ENCODE measurements at regions of chr11 and their contacts with region 1.

Region 1: DNA sequence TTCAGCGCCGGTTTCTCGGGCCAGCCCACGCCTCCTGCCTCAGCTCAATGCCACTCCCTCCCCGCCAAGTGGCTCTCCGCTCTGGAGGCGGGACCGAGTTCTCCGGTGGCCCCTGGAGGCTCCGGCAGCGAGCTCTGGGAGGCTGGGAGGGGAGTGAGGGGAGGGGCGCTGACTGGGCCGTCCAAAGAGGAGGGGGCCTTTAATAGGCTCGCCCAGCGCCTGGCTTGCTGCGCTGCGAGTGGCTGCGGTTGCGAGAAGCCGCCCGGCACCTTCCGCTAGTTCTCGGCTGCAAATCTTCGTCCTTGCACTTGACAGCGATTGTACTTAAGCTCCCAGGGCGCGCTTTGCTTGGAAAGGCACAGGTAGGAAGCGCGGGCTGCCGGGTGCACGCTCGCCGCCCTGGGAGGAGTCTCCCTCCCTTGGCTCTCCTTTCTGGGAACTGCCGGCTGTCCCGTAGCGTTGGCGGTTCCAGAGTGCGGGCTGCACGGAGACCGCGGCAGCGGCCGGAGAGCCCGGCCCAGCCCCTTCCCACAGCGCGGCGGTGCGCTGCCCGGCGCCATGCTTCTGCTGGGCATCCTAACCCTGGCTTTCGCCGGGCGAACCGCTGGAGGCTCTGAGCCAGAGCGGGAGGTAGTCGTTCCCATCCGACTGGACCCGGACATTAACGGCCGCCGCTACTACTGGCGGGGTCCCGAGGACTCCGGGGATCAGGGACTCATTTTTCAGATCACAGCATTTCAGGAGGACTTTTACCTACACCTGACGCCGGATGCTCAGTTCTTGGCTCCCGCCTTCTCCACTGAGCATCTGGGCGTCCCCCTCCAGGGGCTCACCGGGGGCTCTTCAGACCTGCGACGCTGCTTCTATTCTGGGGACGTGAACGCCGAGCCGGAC is at the start of gene ADAMTS15:
- DNase-seq: peak; percentile 80 to 87
- H3K4me3 ChIP-seq: peak within 1 kb of the TSS; percentile 49 to 72 (median 54)
- H3K27ac ChIP-seq: no peak within 1 kb of the TSS
- H3K4me1 ChIP-seq: peaks cover 0 to 9% (median 6%) of the 10 kb centered on the region in 4 experiments; a peak in 6 of 7 replicates
- H3K27me3 ChIP-seq: peaks cover 9 to 63% (median 44%) of the 10 kb centered on the region in 4 experiments
- CTCF ChIP-seq: no peak; a peak in 1 of 4 replicates
- EP300 ChIP-seq: no peak
- POLR2A ChIP-seq: peak in 1 of 2 experiments; percentile 34; a peak in 1 of 3 replicates
- RAD21 ChIP-seq: no peak
- total RNA-seq, gene ADAMTS15: 4.7 and 4.9 TPM in 2 replicates

Region 2: DNA sequence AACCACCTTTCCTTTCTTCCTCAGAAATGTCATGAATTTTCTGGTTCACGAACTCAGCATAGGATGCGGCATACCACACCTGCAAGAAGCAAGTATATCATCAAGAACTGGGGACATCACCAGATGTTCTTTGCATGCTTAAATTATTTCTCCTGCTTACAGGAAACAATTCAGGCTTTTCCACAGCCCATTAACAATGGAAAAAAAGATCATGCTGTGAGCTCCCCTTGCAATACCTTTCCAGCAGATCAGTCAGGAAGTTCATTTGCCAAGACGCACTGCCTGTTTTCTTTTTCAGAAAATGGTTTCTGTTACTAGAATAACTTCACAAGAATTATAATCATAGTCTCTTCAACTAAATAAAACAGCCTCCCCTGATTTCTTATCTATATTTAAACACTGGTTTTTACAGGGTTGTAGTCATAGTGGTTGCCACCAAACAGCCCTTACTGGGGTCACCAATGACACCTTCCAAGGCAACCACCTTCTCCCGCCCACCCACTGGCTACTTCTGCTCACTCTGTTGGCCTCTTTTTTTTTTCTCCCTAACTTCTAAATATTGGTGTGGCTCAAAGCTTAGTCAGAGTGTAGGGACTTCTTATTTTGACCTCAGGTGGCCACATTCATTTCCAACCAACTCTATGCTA is 510.9 kb before region 1 on chr11:
- CTCF ChIA-PET with region 1: no interaction called
- POLR2A ChIA-PET with region 1: no interaction called
- DNase-seq: no peak
- H3K4me3 ChIP-seq: no peak overlapping the region
- H3K27ac ChIP-seq: no peak overlapping the region
- H3K4me1 ChIP-seq: peaks cover 0 to 11% (median 6%) of the 10 kb centered on the region in 4 experiments; a peak in 6 of 7 replicates
- H3K27me3 ChIP-seq: no peaks in the 10 kb centered on the region
- CTCF ChIP-seq: no peak
- EP300 ChIP-seq: no peak
- POLR2A ChIP-seq: no peak
- RAD21 ChIP-seq: no peak

Region 3: DNA sequence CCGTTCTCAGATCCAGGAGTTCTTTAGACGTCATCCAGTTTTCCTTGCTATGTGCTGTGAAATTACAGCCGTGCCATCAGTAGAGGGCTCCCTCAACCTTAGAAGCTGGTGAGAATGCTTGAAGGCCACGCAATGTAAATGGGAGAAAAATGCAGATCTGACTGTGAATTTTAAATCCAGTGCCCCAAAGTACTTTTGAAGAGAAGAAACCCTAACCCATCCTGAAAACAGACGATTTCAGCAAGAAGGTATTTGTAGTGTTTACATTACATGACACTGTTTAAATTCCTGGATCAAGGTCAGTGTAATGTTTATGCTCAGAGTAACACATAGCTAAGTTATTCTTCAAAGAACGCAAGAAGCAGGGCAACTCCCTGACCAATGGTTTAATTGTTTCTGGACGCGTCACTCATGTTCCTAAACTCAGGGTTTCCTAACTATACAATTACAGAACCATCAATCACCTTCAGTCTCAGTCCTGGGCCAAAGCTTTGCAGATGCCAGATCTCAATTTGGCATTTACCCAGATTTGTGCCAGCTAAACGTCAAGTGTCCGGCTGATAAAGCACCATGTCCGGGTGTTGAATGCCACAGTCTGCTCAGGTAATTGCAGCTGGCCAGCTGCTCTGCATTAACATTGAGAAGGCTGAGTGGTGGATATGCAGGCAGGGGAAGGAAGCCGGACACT is 58.4 kb before region 1 on chr11:
- CTCF ChIA-PET with region 1: no interaction called
- POLR2A ChIA-PET with region 1: no interaction called
- DNase-seq: no peak
- H3K4me3 ChIP-seq: no peak overlapping the region
- H3K27ac ChIP-seq: no peak overlapping the region
- H3K4me1 ChIP-seq: peaks cover 0 to 6% (median 1%) of the 10 kb centered on the region in 4 experiments; a peak in 3 of 7 replicates
- H3K27me3 ChIP-seq: no peaks in the 10 kb centered on the region; a peak in 1 of 7 replicates
- CTCF ChIP-seq: peak; percentile 1 to 61 (median 55)
- EP300 ChIP-seq: no peak
- POLR2A ChIP-seq: no peak
- RAD21 ChIP-seq: peak; percentile 63 to 71

Region 4: DNA sequence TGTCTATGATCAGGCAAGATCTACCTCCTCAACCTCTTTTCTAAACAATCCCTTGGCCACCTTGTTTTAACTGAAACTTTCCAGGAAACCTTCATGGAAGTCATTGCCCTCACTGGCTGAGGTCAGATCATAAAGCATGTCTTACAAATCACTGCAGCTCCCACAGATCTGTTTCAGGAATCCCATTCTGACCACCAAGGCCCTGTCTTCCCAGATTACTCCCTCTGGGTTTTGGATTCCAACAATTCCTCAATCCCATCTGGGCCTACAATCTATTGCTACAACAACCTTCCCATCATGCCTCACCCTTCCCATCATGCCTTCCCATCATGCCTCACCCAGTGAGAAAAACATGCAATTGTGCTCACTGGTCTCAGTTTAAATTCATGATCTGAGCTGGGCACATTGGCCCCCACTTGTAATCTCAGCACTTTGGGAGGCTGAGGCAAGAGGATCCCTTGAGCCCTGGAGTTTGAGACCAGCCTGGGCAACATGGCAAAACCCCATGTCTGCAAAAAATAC is 15.7 kb after region 1 on chr11:
- CTCF ChIA-PET with region 1: interaction called, 16 read pairs
- POLR2A ChIA-PET with region 1: no interaction called
- DNase-seq: no peak
- H3K4me3 ChIP-seq: no peak overlapping the region
- H3K27ac ChIP-seq: no peak overlapping the region
- H3K4me1 ChIP-seq: no peaks in the 10 kb centered on the region
- H3K27me3 ChIP-seq: no peaks in the 10 kb centered on the region
- CTCF ChIP-seq: no peak
- EP300 ChIP-seq: no peak
- POLR2A ChIP-seq: no peak
- RAD21 ChIP-seq: no peak

Region 5: GRCh38 chr11:130510407-130511006 is 61.8 kb after region 1 on chr11:
- CTCF ChIA-PET with region 1: interaction called, 13 read pairs
- POLR2A ChIA-PET with region 1: no interaction called
- DNase-seq: peak in 1 of 2 experiments; percentile 34
- H3K4me3 ChIP-seq: no peak overlapping the region
- H3K27ac ChIP-seq: no peak overlapping the region
- H3K4me1 ChIP-seq: no peaks in the 10 kb centered on the region; a peak in 1 of 7 replicates
- H3K27me3 ChIP-seq: no peaks in the 10 kb centered on the region
- CTCF ChIP-seq: no peak
- EP300 ChIP-seq: no peak
- POLR2A ChIP-seq: no peak
- RAD21 ChIP-seq: no peak

Region 6: GRCh38 chr11:130515829-130516553 is 67.3 kb after region 1 on chr11:
- CTCF ChIA-PET with region 1: interaction called, 13 read pairs
- POLR2A ChIA-PET with region 1: no interaction called
- DNase-seq: no peak
- H3K4me3 ChIP-seq: no peak overlapping the region
- H3K27ac ChIP-seq: no peak overlapping the region
- H3K4me1 ChIP-seq: peaks cover 6 to 11% (median 7%) of the 10 kb centered on the region in 4 experiments
- H3K27me3 ChIP-seq: no peaks in the 10 kb centered on the region; a peak in 1 of 7 replicates
- CTCF ChIP-seq: no peak
- EP300 ChIP-seq: no peak
- POLR2A ChIP-seq: no peak
- RAD21 ChIP-seq: no peak

Region 7: DNA sequence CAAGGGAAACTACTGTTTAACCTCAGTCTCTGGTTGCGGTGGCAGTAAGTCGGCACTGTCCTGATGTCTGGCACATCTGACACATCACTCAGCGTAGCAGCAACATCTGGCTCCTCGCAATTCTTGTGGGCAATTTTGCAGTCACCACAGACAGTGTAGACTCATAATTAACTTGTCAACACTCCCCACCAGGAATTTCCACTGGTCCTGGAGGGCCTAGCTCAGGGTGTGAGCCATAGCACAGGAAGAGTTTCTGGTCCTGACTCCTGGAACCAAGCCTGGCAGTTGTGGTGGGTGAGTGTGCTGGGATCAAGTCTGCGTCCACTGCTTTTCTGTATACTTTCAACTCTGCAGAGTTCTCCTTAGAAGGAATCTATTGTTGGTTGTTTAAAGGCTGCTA is 257.9 kb after region 1 on chr11:
- CTCF ChIA-PET with region 1: no interaction called
- POLR2A ChIA-PET with region 1: no interaction called
- DNase-seq: no peak
- H3K4me3 ChIP-seq: no peak overlapping the region
- H3K27ac ChIP-seq: no peak overlapping the region
- H3K4me1 ChIP-seq: no peaks in the 10 kb centered on the region; a peak in 1 of 7 replicates
- H3K27me3 ChIP-seq: no peaks in the 10 kb centered on the region
- CTCF ChIP-seq: no peak
- EP300 ChIP-seq: no peak
- POLR2A ChIP-seq: no peak
- RAD21 ChIP-seq: no peak

Region 8: DNA sequence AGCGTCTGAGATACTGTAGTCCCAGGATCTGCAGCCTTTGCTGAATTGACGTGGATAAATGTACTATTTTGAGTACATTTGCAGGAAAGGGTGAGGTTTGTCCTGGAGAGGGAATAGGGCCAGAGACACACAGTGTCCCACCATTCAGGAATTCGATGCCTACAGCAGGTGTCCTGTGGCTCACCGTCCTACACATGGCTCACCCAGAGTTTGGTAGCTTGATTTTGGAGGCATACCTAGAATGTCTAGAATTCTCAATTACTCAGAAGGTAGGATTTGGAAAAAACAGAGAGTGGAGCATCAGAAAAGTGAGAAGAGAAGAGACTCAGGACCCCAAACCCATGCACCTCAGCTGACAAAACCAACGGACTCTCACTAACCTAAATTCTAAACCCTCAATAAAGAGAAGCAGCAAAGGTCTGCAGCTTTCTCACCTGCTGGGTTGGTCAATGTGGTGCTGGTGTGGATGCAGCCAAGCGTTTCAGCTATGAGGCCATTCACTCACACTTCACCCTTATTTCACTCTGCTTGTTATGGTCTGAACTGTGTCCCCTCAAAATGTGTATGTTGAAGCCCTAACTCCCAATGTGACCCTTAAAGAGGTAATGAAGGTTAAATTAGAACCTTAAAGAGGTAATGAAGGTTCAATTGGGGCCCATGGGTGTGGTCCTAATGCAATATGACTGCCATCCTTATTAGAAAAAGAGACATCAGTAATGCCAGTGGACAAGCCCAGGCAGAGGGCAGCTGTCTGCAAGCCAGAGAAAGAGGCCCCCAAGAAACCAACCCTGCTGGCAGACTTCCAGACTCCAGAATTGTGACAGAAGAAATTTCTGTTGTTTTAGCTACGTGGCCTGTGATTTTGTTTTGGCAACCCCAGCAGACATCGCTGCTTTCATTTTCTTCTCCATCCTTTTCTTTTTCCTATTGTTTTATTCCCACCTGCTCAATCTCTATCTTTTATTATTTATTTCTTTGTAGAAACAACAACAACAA is 279.8 kb after region 1 on chr11:
- CTCF ChIA-PET with region 1: no interaction called
- POLR2A ChIA-PET with region 1: no interaction called
- DNase-seq: no peak
- H3K4me3 ChIP-seq: no peak overlapping the region
- H3K27ac ChIP-seq: no peak overlapping the region
- H3K4me1 ChIP-seq: no peaks in the 10 kb centered on the region; a peak in 1 of 7 replicates
- H3K27me3 ChIP-seq: no peaks in the 10 kb centered on the region
- CTCF ChIP-seq: no peak
- EP300 ChIP-seq: no peak
- POLR2A ChIP-seq: no peak
- RAD21 ChIP-seq: no peak